Right cardiac atrium (tissue), 5 donors: ENCODE measurements at regions of chr15 and their contacts with region 1.

Region 1: DNA sequence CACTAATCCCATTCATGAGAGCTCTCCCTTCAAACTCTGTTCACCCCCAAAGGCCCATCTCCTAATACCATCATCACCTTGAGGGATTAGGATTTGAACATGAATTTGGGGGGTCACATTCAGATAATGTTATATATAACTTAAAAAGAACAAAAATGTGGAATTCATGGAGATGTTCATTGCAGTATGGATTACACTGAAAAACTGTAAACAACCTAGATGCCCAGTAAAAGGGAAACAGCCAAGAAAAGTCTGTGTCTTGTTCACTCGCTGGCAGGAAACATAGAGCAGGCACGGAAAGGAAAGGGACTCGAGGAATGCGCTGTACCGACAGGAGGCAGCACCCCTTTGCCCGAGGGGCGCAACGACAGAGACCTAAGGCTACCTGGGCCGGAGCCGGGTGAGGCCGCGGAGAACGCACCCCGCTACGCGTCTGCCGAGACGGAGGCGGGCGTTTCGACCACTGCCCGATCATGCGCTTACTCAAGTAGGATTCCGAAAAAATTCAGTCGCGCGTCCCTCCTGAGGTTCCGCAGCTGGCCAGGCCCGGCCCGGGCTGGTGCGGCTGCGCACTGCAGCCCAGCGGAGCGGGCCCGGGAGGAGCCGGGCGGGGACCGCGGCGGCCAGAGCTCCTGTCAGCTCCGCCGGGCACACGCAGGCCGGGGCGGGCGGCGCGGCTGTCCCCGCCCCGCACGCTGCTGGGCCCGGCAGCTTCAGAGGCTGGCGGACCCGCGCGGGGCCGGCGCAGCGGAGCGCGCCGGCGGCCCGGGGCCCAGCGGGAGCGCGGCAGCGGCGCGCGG is 862 bp upstream of the MAN2A2 start:
- DNase-seq: peak; percentile 82 to 92 (median 92)
- ATAC-seq: peak; percentile 93 to 95
- H3K4me3 ChIP-seq: peak overlapping the region; percentile 83
- H3K27ac ChIP-seq: peak overlapping the region; percentile 88
- H3K4me1 ChIP-seq: peaks cover 10% of the 10 kb centered on the region
- H3K27me3 ChIP-seq: no peaks in the 10 kb centered on the region

Region 2: GRCh38 chr15:90851114-90851513 is 51.1 kb before region 1 on chr15:
- intact Hi-C with region 1: no loop called
- DNase-seq: no peak
- ATAC-seq: no peak
- H3K4me3 ChIP-seq: no peak overlapping the region
- H3K27ac ChIP-seq: no peak overlapping the region
- H3K4me1 ChIP-seq: no peaks in the 10 kb centered on the region
- H3K27me3 ChIP-seq: no peaks in the 10 kb centered on the region

Region 3: GRCh38 chr15:90931737-90932659 is 29.8 kb after region 1 on chr15 and contains the start of gene HDDC3:
- intact Hi-C with region 1: loop called in 2 of 4 experiments (anchors 2 to 5 kb)
- DNase-seq: peak; percentile 93 to 97 (median 97)
- ATAC-seq: peak; percentile 64 to 71
- H3K4me3 ChIP-seq: peak within 1 kb of the TSS; percentile 58
- H3K27ac ChIP-seq: peak within 1 kb of the TSS; percentile 83
- H3K4me1 ChIP-seq: peaks cover 10% of the 10 kb centered on the region
- H3K27me3 ChIP-seq: no peaks in the 10 kb centered on the region
- total RNA-seq, gene HDDC3: 13.5 to 17.7 (median 17.0) TPM

Region 4: GRCh38 chr15:91214675-91215590 is 312.7 kb after region 1 on chr15:
- intact Hi-C with region 1: no loop called
- DNase-seq: no peak
- ATAC-seq: no peak
- H3K4me3 ChIP-seq: no peak overlapping the region
- H3K27ac ChIP-seq: no peak overlapping the region
- H3K4me1 ChIP-seq: no peaks in the 10 kb centered on the region
- H3K27me3 ChIP-seq: no peaks in the 10 kb centered on the region